ENCODE measurements at regions of chr3 and their contacts with region 1.

Region 1: GRCh38 chr3:186570096-186570940 is at the start of gene DNAJB11:
- DNase-seq: peak; percentile 99
- ATAC-seq: peak; percentile 82
- H3K4me3 ChIP-seq: peak within 1 kb of the TSS; percentile 92
- H3K27ac ChIP-seq: peak within 1 kb of the TSS; percentile 48
- H3K4me1 ChIP-seq: peaks cover 16% of the 10 kb centered on the region
- H3K27me3 ChIP-seq: no peaks in the 10 kb centered on the region
- CTCF ChIP-seq: no peak
- total RNA-seq, gene DNAJB11: 117 and 120 TPM in 2 replicates

Region 2: GRCh38 chr3:186108941-186109865 is 461.1 kb before region 1 on chr3 and contains the start of gene ETV5:
- CTCF ChIA-PET with region 1: no interaction called
- POLR2A ChIA-PET with region 1: no interaction called
- intact Hi-C with region 1: loop called (anchors 1 kb)
- DNase-seq: peak; percentile 99
- ATAC-seq: peak; percentile 90
- H3K4me3 ChIP-seq: peak within 1 kb of the TSS; percentile 96
- H3K27ac ChIP-seq: peak within 1 kb of the TSS; percentile 56
- H3K4me1 ChIP-seq: peaks cover 21% of the 10 kb centered on the region
- H3K27me3 ChIP-seq: no peaks in the 10 kb centered on the region
- CTCF ChIP-seq: no peak
- total RNA-seq, gene ETV5: 41.4 and 60.6 TPM in 2 replicates

Region 3: DNA sequence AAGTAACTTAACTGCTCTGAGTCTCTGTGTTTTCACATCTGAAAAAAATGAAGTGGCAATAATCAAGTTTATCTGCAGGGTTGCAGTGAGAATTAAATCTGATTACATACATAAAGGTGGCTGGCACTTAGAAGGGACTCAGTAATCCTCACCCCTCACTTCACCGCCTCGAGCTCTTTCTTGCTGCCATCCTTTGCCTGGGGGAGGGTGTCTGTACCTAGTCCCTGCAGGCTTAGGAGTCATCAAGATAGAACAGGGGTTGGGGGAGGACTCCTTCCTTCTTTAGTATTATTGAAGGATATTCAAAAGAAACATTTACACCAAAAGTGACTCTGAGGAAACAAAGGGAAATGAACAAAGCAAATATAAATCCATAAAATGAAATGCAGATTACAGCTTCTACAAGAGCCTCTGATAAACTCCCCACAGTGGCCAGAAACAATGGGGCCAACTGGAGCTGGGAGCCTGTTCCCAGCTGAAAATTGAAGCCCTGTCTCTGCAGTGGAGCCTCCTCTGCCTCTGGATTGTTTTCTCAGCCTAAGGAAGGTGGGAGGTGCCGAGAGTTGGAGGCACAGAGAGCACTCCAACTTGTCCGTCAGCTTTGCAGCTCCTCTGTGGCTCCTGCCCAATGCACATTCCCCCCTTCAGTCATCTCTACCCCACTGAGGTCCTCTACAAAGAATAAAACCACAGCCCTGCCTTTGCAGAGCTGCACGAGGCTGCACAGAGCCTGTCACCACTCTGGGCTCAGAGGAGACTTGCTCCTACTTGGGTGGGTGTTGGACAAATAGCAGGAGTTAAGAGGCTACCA is 68.0 kb before region 1 on chr3:
- CTCF ChIA-PET with region 1: no interaction called
- POLR2A ChIA-PET with region 1: no interaction called
- intact Hi-C with region 1: no loop called
- DNase-seq: no peak
- ATAC-seq: no peak
- H3K4me3 ChIP-seq: 0 out of 2 replicates have a peak overlapping the region, but pooled peaks have one; percentile 29
- H3K27ac ChIP-seq: no peak overlapping the region
- H3K4me1 ChIP-seq: no peaks in the 10 kb centered on the region
- H3K27me3 ChIP-seq: peaks cover 16% of the 10 kb centered on the region
- CTCF ChIP-seq: no peak

Region 4: GRCh38 chr3:186589121-186589520 is 18.8 kb after region 1 on chr3:
- CTCF ChIA-PET with region 1: no interaction called
- POLR2A ChIA-PET with region 1: interaction called, 12 read pairs
- intact Hi-C with region 1: no loop called
- DNase-seq: no peak
- ATAC-seq: peak; percentile 9; the same call in 1 of the 2 replicates
- H3K4me3 ChIP-seq: peak overlapping the region; percentile 25
- H3K27ac ChIP-seq: peak overlapping the region; percentile 49
- H3K4me1 ChIP-seq: peaks cover 28% of the 10 kb centered on the region
- H3K27me3 ChIP-seq: no peaks in the 10 kb centered on the region
- CTCF ChIP-seq: peak; percentile 51; the same call in 1 of the 2 replicates

Region 5: GRCh38 chr3:186630950-186631641 is 60.8 kb after region 1 on chr3:
- CTCF ChIA-PET with region 1: no interaction called
- POLR2A ChIA-PET with region 1: no interaction called
- intact Hi-C with region 1: no loop called
- DNase-seq: no peak
- ATAC-seq: no peak
- H3K4me3 ChIP-seq: no peak overlapping the region
- H3K27ac ChIP-seq: no peak overlapping the region
- H3K4me1 ChIP-seq: no peaks in the 10 kb centered on the region
- H3K27me3 ChIP-seq: no peaks in the 10 kb centered on the region
- CTCF ChIP-seq: no peak

Region 6: DNA sequence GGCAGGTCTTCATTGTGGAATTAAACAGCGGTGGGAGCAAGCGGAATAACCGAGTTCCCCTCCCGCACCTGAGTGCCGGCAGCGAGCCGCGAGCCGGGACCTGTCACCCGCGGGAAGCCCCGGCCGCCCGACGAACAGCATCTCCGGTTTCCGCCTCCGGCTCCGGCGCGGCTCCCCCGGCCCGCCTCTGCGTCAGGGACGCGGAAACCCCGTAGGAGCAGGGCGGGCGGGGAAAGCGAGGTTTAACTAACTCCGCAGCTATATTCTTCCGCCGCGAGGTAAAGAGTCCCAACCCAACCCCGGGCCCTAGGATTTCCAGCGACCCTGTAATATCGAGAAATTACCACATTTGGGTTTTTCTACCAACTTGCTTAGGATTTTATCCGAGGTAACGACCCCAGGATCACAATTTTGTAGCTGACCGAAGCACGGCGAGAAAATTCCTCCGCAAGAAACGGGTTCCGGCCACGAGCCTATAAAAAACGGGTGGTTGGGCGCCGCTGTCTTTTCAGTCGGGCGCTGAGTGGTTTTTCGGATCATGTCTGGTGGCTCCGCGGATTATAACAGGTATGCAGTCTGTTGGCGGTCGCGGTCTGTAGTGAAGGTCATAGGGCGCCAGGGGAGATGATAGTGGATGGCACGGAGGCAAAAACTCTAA is 212.9 kb after region 1 on chr3 and contains the start of gene EIF4A2:
- CTCF ChIA-PET with region 1: interaction called, 4 read pairs
- POLR2A ChIA-PET with region 1: interaction called, 9 read pairs
- intact Hi-C with region 1: loop called (anchors 10 kb)
- DNase-seq: peak; percentile 91
- ATAC-seq: peak; percentile 71
- H3K4me3 ChIP-seq: peak within 1 kb of the TSS; percentile 100
- H3K27ac ChIP-seq: peak within 1 kb of the TSS; percentile 73
- H3K4me1 ChIP-seq: peaks cover 31% of the 10 kb centered on the region
- H3K27me3 ChIP-seq: no peaks in the 10 kb centered on the region
- CTCF ChIP-seq: no peak
- total RNA-seq, gene EIF4A2: 204 and 233 TPM in 2 replicates

Region 7: DNA sequence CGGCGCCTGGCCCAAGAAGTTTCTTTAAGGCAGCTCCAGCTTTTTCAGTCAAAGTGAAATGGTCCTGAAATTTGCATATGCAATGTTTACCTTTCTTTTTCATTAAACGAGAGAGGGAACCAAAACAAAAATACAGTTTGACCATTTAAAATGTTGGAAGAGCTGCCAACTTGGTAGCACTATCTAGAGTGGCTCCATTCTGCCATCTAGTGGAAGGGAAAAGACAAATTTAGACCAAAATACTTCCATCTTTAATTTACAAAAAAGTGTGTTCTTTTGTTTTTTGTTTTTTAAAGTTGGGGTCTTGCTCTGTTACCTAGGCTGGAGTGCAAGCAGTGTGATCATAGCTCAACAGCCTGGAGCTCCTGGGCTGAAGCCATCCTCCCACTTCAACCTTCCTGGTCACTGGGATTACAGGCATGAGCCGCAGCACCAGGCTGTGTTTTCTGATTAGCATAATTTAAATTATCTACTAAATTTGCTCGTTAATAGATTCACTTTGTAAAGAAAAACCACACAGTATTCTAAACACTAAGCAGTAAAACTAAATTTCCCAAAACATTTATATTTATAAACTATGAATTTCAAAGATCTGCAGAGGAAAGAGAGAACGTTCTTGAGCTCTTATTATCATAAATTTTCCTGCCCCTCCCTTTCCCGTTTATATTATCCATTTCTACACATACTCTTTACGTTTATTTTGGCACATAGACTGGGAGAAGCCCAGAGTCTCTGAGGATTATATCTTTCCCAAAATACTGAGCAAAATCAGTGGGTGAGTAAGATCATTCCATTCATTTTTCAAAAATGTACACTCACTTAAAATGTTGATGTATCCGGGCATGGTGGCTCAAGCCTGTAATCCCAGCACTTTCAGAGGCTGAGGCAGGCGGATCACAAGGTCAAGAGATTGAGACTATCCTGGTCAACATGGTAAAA is 251.4 kb after region 1 on chr3:
- CTCF ChIA-PET with region 1: interaction called, 3 read pairs
- POLR2A ChIA-PET with region 1: no interaction called
- intact Hi-C with region 1: loop called (anchors 1 kb)
- DNase-seq: peak; percentile 80
- ATAC-seq: peak; percentile 50
- H3K4me3 ChIP-seq: no peak overlapping the region
- H3K27ac ChIP-seq: no peak overlapping the region
- H3K4me1 ChIP-seq: peaks cover 9% of the 10 kb centered on the region; the same call in 1 of the 2 replicates
- H3K27me3 ChIP-seq: no peaks in the 10 kb centered on the region
- CTCF ChIP-seq: peak; percentile 84